Naive thymus-derived CD4-positive, alpha-beta T cell (primary cell): ENCODE measurements at regions of chr19 and their contacts with region 1.

Region 1: DNA sequence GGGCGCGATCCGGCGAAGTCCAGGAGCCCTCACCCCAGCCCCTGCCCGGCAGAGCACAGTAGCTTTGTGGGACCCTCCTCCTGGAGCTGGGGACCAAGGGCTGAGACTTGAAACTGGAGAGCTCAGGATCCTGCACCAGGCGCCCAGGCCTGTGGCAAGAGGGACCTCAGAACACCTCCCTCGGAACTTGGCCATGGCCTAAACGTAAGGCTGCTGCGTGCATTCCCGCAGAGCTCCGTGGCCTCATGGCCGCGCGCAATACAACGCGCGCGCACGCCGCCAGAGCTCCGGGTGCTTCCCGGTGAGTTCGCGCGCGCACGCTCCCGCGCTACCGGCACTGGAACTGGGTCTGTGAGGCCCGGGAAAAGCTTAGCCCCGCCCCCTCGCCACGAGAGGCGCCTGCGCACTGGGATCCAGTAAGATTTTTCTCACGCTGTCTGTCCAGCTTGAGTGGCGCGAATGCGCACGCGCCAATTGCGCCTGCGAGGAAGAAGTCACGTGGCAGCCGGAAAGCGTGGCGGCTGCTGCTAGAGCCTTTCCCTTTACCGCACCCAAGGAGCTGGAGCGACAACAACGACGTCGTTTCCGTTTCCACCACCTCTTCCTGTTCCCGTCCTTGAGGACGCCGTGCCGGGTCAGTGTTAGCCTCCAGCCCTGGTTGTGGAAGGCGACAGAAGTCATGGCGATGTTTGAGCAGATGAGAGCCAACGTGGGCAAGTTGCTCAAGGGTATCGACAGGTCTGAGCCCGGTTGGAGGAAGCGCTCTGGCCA is at the start of gene EIF3K:
- DNase-seq: peak; percentile 94 to 99 (median 96)
- ATAC-seq: peak; percentile 86
- H3K4me3 ChIP-seq: peak within 1 kb of the TSS; percentile 96
- H3K4me3 Mint-ChIP-seq: peak within 1 kb of the TSS; percentile 95 to 100 (median 98)
- H3K27ac ChIP-seq: peak within 1 kb of the TSS; percentile 99
- H3K27ac Mint-ChIP-seq: peak within 1 kb of the TSS; percentile 89 to 100 (median 97)
- H3K4me1 ChIP-seq: peaks cover 33 to 40% of the 10 kb centered on the region in 2 donors
- H3K4me1 Mint-ChIP-seq: peaks cover 38 to 61% (median 44%) of the 10 kb centered on the region in 7 donors
- H3K27me3 ChIP-seq: no peaks in the 10 kb centered on the region
- H3K27me3 Mint-ChIP-seq: no peaks in the 10 kb centered on the region
- total RNA-seq, gene EIF3K: 294 to 405 (median 337) TPM

Region 2: GRCh38 chr19:38049105-38049649 is 569.6 kb before region 1 on chr19:
- CTCF ChIA-PET with region 1: no interaction called
- POLR2A ChIA-PET with region 1: no interaction called
- intact Hi-C with region 1: loop called in 1 of 2 experiments (anchors 5 kb)
- DNase-seq: peak; percentile 20 to 87 (median 82)
- ATAC-seq: peak; percentile 89
- H3K4me3 ChIP-seq: peak overlapping the region; percentile 19
- H3K4me3 Mint-ChIP-seq: peak overlapping the region; percentile 71 to 91 (median 85)
- H3K27ac ChIP-seq: peak overlapping the region; percentile 74
- H3K27ac Mint-ChIP-seq: peak overlapping the region; percentile 94 to 100 (median 97)
- H3K4me1 ChIP-seq: peaks cover 20 to 36% of the 10 kb centered on the region in 2 donors
- H3K4me1 Mint-ChIP-seq: peaks cover 22 to 56% (median 44%) of the 10 kb centered on the region in 7 donors
- H3K27me3 ChIP-seq: no peaks in the 10 kb centered on the region
- H3K27me3 Mint-ChIP-seq: peaks cover 0 to 2% (median 0%) of the 10 kb centered on the region in 5 donors

Region 3: DNA sequence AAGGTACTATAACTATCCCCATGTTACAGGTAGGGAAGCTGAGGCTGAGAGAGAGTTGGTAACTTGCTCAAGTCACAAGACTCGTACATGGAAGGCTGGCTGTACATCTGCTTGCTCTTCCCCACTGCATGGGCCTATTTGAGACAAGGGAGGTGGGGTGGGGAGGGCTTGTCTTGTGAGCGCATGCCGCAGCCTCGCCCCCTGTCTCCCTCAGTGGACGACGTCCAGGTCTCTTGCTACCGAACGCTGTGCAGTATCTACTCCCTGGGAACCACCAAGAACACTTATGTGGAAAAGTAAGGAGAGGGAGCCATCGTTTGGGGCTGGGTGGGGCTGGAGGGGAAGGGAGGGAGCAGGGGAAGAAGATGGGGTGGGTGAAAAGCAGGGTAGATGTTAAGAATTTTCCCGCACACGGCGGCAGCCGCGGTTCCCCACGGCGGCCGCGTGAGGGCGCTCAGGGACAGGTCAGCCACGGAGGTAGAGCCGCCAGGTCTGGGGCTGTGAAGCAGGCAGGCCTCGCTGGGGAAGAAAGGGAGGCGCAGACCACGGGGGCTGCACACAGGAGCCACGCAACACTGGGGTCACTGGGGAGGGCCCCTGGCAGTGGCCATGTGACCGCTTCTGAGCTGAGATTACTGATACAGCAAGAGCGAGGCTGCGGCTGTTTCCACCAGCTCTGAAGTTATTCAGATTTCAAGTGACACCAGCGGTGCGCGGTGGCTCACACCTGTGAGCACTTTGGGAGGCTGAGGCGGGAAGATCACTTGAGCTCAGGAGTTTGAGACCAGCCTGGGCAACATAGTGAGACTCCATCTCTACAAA is 103.8 kb before region 1 on chr19:
- CTCF ChIA-PET with region 1: interaction called, 16 read pairs
- POLR2A ChIA-PET with region 1: interaction called, 8 read pairs
- intact Hi-C with region 1: loop called (anchors 1 kb)
- DNase-seq: peak; percentile 47 to 84 (median 74)
- ATAC-seq: peak; percentile 95
- H3K4me3 ChIP-seq: no peak overlapping the region
- H3K4me3 Mint-ChIP-seq: peak overlapping the region in 2 of 10 donors; percentile 16 to 45
- H3K27ac ChIP-seq: no peak overlapping the region
- H3K27ac Mint-ChIP-seq: peak overlapping the region in 3 of 9 donors; percentile 14 to 64 (median 60)
- H3K4me1 ChIP-seq: peaks cover 0 to 10% of the 10 kb centered on the region in 2 donors
- H3K4me1 Mint-ChIP-seq: peaks cover 6 to 30% (median 9%) of the 10 kb centered on the region in 7 donors
- H3K27me3 ChIP-seq: no peaks in the 10 kb centered on the region
- H3K27me3 Mint-ChIP-seq: peaks cover 0 to 4% (median 4%) of the 10 kb centered on the region in 5 donors

Region 4: DNA sequence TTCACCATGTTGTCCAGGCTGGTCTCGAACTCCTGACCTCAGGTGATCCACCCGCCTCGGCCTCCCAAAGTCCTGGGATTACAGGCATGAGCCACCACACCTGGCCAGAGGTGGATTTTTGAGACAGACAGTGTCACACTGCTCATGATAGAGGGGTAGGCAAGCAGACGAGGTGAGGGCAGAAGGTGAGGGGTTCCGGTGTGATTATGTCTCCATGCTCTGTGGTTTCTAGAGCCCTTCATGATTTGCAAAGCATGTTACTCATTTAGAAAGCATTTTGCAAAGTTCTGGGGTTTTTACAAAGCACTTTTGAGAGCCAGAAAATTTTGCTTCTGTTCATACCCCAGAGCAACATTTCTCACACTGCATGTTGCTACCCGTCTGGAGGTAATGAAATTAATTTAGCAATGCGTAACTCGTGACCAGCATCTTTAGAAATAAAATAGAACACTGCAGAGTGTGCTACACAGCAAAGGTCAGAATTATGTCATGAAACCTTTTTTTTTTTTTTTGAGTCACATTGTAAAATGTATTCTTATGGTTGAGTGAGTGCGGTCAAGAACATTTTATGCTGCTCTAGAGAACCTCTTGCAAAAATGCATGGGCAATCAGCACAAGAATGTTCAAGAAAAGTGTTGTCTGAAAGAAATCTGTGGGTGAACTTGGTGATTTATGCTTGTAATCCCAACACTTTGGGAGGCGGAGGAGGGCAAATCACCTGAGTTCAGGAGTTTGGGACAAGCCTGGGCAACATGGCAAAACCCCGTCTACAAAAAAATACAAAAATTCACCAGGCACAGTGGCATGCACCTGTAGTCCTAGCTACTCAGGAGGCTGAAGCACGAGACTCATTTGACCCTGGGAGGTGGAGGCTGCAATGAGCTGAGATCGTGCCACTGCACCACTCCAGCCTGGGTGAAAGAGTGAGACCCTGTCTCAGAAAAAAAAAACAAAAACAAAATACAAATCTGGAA is 59.1 kb before region 1 on chr19:
- CTCF ChIA-PET with region 1: no interaction called
- POLR2A ChIA-PET with region 1: no interaction called
- intact Hi-C with region 1: loop called in 1 of 2 experiments (anchors 5 kb)
- DNase-seq: no peak
- ATAC-seq: peak; percentile 71
- H3K4me3 ChIP-seq: no peak overlapping the region
- H3K4me3 Mint-ChIP-seq: peak overlapping the region in 1 of 10 donors; percentile 71
- H3K27ac ChIP-seq: no peak overlapping the region
- H3K27ac Mint-ChIP-seq: peak overlapping the region in 1 of 9 donors; percentile 80
- H3K4me1 ChIP-seq: peaks cover 0 to 49% of the 10 kb centered on the region in 2 donors
- H3K4me1 Mint-ChIP-seq: peaks cover 2 to 44% (median 7%) of the 10 kb centered on the region in 7 donors
- H3K27me3 ChIP-seq: no peaks in the 10 kb centered on the region
- H3K27me3 Mint-ChIP-seq: peaks cover 11 to 25% (median 13%) of the 10 kb centered on the region in 5 donors

Region 5: DNA sequence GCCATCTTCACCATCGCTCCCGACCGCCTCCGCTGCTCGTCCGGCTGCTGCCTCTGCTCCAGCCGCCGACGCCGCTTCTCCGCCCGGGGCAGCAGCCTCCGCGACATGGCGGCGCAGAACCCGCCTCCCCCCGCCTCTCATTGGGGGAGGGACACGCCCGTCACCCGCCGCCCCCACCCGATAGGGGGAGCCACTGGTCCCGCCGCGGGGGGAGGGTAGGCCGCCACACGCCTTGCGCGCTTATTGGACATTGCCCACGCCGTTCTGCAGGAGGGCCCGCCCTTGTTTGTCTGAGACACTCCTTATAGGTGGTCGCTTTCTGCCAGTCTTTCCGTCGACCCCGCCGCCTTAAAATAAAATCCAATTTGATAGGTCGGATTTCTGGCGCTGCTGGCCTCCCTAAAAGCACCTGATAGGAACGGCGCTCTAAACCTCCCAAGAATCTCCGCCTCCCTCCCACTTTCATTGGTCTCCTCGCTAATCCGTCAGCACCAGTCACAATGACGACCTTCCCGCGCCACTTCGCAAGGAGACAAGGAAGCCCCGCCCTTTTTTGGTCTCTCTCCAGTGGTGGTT is 231.2 kb after region 1 on chr19 and contains the start of gene HNRNPL:
- CTCF ChIA-PET with region 1: no interaction called
- POLR2A ChIA-PET with region 1: interaction called, 4 read pairs
- intact Hi-C with region 1: loop called (anchors 2 to 5 kb)
- DNase-seq: peak; percentile 99 to 100 (median 100)
- ATAC-seq: peak; percentile 78
- H3K4me3 ChIP-seq: peak within 1 kb of the TSS; percentile 81
- H3K4me3 Mint-ChIP-seq: peak within 1 kb of the TSS; percentile 88 to 99 (median 96)
- H3K27ac ChIP-seq: peak within 1 kb of the TSS; percentile 96
- H3K27ac Mint-ChIP-seq: peak within 1 kb of the TSS; percentile 94 to 100 (median 99)
- H3K4me1 ChIP-seq: peaks cover 24 to 41% of the 10 kb centered on the region in 2 donors
- H3K4me1 Mint-ChIP-seq: peaks cover 30 to 67% (median 50%) of the 10 kb centered on the region in 7 donors
- H3K27me3 ChIP-seq: no peaks in the 10 kb centered on the region
- H3K27me3 Mint-ChIP-seq: peaks cover 0 to 5% (median 0%) of the 10 kb centered on the region in 5 donors
- total RNA-seq, gene HNRNPL: 339 to 539 (median 505) TPM